Activated B cell treated with CpG ODN at 0.5 μM for 24 hours (primary cell): ENCODE measurements at regions of chr13 and their contacts with region 1.

Region 1: GRCh38 chr13:21579754-21580316 is 24.1 kb downstream of the MICU2 start:
- DNase-seq: no peak
- ATAC-seq: no peak
- H3K4me3 Mint-ChIP-seq: no peak overlapping the region
- H3K27ac Mint-ChIP-seq: no peak overlapping the region
- H3K4me1 Mint-ChIP-seq: peaks cover 30% of the 10 kb centered on the region
- H3K27me3 Mint-ChIP-seq: no peaks in the 10 kb centered on the region
- CTCF ChIP-seq: no peak

Region 2: GRCh38 chr13:21567714-21568113 is 12.1 kb before region 1 on chr13:
- CTCF ChIA-PET with region 1: no interaction called
- POLR2A ChIA-PET with region 1: no interaction called
- intact Hi-C with region 1: loop called (anchors 2 kb)
- DNase-seq: no peak
- ATAC-seq: no peak
- H3K4me3 Mint-ChIP-seq: no peak overlapping the region
- H3K27ac Mint-ChIP-seq: no peak overlapping the region
- H3K4me1 Mint-ChIP-seq: peaks cover 26% of the 10 kb centered on the region
- H3K27me3 Mint-ChIP-seq: no peaks in the 10 kb centered on the region
- CTCF ChIP-seq: no peak

Region 3: GRCh38 chr13:22049384-22049783 is 469.5 kb after region 1 on chr13:
- CTCF ChIA-PET with region 1: no interaction called
- POLR2A ChIA-PET with region 1: no interaction called
- intact Hi-C with region 1: no loop called
- DNase-seq: no peak
- ATAC-seq: no peak
- H3K4me3 Mint-ChIP-seq: no peak overlapping the region
- H3K27ac Mint-ChIP-seq: no peak overlapping the region
- H3K4me1 Mint-ChIP-seq: no peaks in the 10 kb centered on the region
- H3K27me3 Mint-ChIP-seq: no peaks in the 10 kb centered on the region
- CTCF ChIP-seq: no peak